ENCODE measurements at regions of chr4 and their contacts with region 1.

Region 1: GRCh38 chr4:156109949-156110900 is 156.6 kb upstream of the CTSO start:
- DNase-seq: peak; percentile 83
- H3K4me3 ChIP-seq: no peak overlapping the region
- H3K27ac ChIP-seq: peak overlapping the region; percentile 90
- H3K4me1 ChIP-seq: peaks cover 24% of the 10 kb centered on the region
- H3K27me3 ChIP-seq: no peaks in the 10 kb centered on the region
- CTCF ChIP-seq: peak; percentile 48 to 61

Region 2: DNA sequence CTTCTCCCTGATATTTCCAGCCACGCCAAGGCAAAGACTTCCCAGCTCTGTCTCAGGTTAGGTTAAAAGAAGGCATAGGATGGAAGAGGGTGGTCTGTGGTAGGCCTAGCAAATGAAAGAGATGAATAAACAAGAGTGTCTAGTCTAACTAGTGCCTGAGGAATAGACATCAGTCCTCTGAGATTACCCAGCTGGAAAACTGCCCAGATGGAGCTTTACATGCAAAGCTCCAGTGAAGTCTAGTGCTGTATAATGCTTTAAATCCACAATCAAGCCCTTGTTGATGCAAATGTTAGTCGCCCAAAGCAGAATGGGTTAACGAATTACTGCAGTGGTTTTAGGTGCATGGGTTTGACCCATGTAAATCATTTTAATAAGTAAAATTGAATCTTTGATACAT is 376.2 kb before region 1 on chr4:
- CTCF ChIA-PET with region 1: no interaction called
- dilution Hi-C with region 1: no loop called
- in situ Hi-C with region 1: no loop called
- intact Hi-C with region 1: no loop called
- DNase-seq: no peak
- H3K4me3 ChIP-seq: no peak overlapping the region
- H3K27ac ChIP-seq: no peak overlapping the region
- H3K4me1 ChIP-seq: no peaks in the 10 kb centered on the region
- H3K27me3 ChIP-seq: no peaks in the 10 kb centered on the region
- CTCF ChIP-seq: no peak

Region 3: DNA sequence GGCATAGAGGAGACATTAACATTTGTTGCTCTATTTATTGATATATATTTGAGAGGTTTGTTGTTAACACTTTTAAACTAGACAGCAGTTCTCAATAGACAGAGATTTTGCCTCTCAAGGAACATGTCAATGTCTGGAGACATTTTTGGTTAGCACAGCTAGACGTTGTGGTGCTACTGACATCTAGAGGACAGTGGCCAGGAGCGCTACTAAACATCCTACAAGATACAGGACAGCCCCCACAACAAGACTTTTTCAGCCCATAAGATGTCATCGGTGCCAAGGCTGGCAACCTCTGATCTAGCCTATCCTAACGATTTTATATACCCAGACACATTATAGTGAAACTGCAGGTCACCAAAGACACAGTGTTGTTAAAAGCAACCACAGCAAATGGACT is 138.1 kb before region 1 on chr4:
- CTCF ChIA-PET with region 1: no interaction called
- dilution Hi-C with region 1: no loop called
- in situ Hi-C with region 1: no loop called
- intact Hi-C with region 1: no loop called
- DNase-seq: no peak
- H3K4me3 ChIP-seq: no peak overlapping the region
- H3K27ac ChIP-seq: no peak overlapping the region
- H3K4me1 ChIP-seq: no peaks in the 10 kb centered on the region
- H3K27me3 ChIP-seq: no peaks in the 10 kb centered on the region
- CTCF ChIP-seq: peak; percentile 14 to 36

Region 4: GRCh38 chr4:156053174-156053573 is 57.1 kb before region 1 on chr4:
- CTCF ChIA-PET with region 1: no interaction called
- dilution Hi-C with region 1: no loop called
- in situ Hi-C with region 1: no loop called
- intact Hi-C with region 1: loop called (anchors 5 kb)
- DNase-seq: peak; percentile 86
- H3K4me3 ChIP-seq: no peak overlapping the region
- H3K27ac ChIP-seq: no peak overlapping the region
- H3K4me1 ChIP-seq: peaks cover 12% of the 10 kb centered on the region
- H3K27me3 ChIP-seq: no peaks in the 10 kb centered on the region
- CTCF ChIP-seq: no peak

Measured in mammary epithelial cell (primary cell).